K562 (cell line): ENCODE measurements at regions of chr3 and their contacts with region 1.

Region 1: GRCh38 chr3:69691860-69692259 is 47.4 kb upstream of the MITF start:
- DNase-seq: no peak
- ATAC-seq: no peak
- H3K4me3 ChIP-seq: no peak overlapping the region
- H3K27ac ChIP-seq: no peak overlapping the region
- H3K4me1 ChIP-seq: peaks cover 11 to 12% of the 10 kb centered on the region in 2 experiments; a peak in 4 of 5 replicates
- H3K27me3 ChIP-seq: no peaks in the 10 kb centered on the region
- CTCF ChIP-seq: no peak
- EP300 ChIP-seq: no peak
- POLR2A ChIP-seq: no peak
- RAD21 ChIP-seq: no peak

Region 2: DNA sequence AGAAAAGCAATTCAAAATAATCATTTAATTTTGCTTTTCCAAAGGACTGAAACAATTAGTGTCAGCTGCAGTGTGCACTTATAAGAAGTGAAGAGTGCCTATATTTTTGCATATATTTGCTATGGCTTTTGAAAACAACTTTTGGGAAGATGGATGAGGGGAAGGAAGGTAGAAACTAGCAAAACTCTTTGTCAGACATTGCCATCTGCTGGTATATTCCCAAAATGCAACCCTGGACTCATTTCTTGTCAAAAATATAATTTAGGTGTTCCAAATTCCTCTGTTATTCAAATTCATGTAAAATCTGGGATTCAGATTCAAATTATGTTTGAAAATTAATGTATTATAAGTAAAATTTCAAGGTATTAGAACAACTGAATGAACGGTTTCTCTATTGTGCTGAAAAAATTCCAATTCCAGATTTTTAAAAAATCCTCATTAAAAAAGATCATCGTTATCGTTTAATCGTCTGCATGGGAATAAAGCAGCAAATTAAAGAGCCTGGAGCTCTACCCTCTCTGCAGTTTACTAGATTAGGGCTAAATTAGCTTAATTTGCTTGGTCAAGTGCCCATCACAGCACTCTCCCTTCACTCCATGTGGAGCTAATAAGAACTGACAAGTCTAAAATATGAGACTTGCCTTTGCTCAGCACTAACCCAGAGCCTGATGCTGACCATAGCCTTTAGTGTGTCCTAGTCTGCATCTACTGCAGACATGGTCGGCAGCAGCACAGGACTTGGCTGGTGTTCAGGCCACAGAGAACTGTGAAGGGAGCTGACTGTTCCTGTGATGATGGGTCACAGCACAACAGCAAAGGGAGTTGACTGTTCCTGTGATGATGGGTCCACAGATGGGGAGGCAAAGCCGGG is 20.5 kb before region 1 on chr3:
- CTCF ChIA-PET with region 1: no interaction called
- POLR2A ChIA-PET with region 1: no interaction called
- in situ Hi-C with region 1: no loop called
- intact Hi-C with region 1: no loop called
- DNase-seq: peak; percentile 22 to 50 (median 35)
- ATAC-seq: peak; percentile 56; the same call in 2 of the 3 replicates
- H3K4me3 ChIP-seq: no peak overlapping the region
- H3K27ac ChIP-seq: no peak overlapping the region
- H3K4me1 ChIP-seq: no peaks in the 10 kb centered on the region; a peak in 1 of 5 replicates
- H3K27me3 ChIP-seq: no peaks in the 10 kb centered on the region
- CTCF ChIP-seq: peak; percentile 29 to 77 (median 50); a peak in 5 of 6 replicates
- EP300 ChIP-seq: no peak
- POLR2A ChIP-seq: no peak
- RAD21 ChIP-seq: peak; percentile 73 to 75

Region 3: GRCh38 chr3:69718866-69719586 is 27.2 kb after region 1 on chr3:
- CTCF ChIA-PET with region 1: no interaction called
- POLR2A ChIA-PET with region 1: interaction called, 3 read pairs
- in situ Hi-C with region 1: no loop called
- intact Hi-C with region 1: loop called (anchors 2 kb)
- DNase-seq: peak in 2 of 4 experiments; percentile 20 to 61
- ATAC-seq: peak; percentile 42
- H3K4me3 ChIP-seq: no peak overlapping the region
- H3K27ac ChIP-seq: peak overlapping the region; percentile 58
- H3K4me1 ChIP-seq: peaks cover 14 to 31% of the 10 kb centered on the region in 2 experiments
- H3K27me3 ChIP-seq: no peaks in the 10 kb centered on the region
- CTCF ChIP-seq: no peak; a peak in 1 of 6 replicates
- EP300 ChIP-seq: peak; percentile 89
- POLR2A ChIP-seq: no peak
- RAD21 ChIP-seq: peak in 1 of 2 experiments; percentile 26; a peak in 2 of 4 replicates

Region 4: GRCh38 chr3:69739204-69740102 is 47.6 kb after region 1 on chr3 and contains the start of gene MITF:
- CTCF ChIA-PET with region 1: no interaction called
- POLR2A ChIA-PET with region 1: interaction called, 4 read pairs
- in situ Hi-C with region 1: no loop called
- intact Hi-C with region 1: loop called (anchors 2 kb)
- DNase-seq: peak; percentile 86 to 93 (median 88)
- ATAC-seq: peak; percentile 90
- H3K4me3 ChIP-seq: peak within 1 kb of the TSS; percentile 58
- H3K27ac ChIP-seq: peak within 1 kb of the TSS; percentile 72
- H3K4me1 ChIP-seq: peaks cover 5 to 34% of the 10 kb centered on the region in 2 experiments; a peak in 3 of 5 replicates
- H3K27me3 ChIP-seq: no peaks in the 10 kb centered on the region
- CTCF ChIP-seq: no peak
- EP300 ChIP-seq: no peak
- POLR2A ChIP-seq: no peak; the same call in 1 of the 2 replicates
- RAD21 ChIP-seq: no peak
- polyA plus RNA-seq, gene MITF: 5.6 to 9.0 TPM

Region 5: DNA sequence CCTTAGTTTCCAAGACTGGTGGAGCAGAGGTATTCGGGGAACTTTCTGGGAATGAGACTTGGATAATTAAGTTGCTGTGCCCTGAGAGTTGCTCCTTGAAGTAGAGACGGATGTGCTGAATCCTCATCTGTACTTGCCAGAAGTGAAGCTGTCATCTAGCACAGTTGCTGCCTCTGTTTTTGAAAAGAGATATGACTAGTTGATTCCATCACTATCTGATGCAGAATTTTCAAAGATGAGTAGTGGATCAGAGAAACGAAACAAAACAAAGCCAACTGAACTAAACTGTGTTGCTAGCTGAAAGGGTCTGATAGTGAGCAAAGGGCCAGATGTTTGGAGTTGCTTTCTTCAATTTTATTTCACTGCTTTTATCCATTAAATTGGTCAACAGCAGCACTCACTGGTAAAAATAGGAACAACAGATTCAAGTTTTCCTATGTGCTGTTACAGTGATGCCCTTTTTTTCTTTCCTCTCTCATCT is 100.1 kb after region 1 on chr3:
- CTCF ChIA-PET with region 1: interaction called, 9 read pairs
- POLR2A ChIA-PET with region 1: interaction called, 3 read pairs
- in situ Hi-C with region 1: loop called (anchors 5 kb)
- intact Hi-C with region 1: loop called (anchors 1 kb)
- DNase-seq: peak; percentile 40 to 81 (median 52)
- ATAC-seq: peak; percentile 90
- H3K4me3 ChIP-seq: no peak overlapping the region; the same call in 1 of the 2 replicates
- H3K27ac ChIP-seq: peak overlapping the region; percentile 78; the same call in 2 of the 3 replicates
- H3K4me1 ChIP-seq: peaks cover 0 to 36% of the 10 kb centered on the region in 2 experiments; a peak in 3 of 5 replicates
- H3K27me3 ChIP-seq: no peaks in the 10 kb centered on the region
- CTCF ChIP-seq: peak; percentile 38 to 74 (median 63); a peak in 5 of 6 replicates
- EP300 ChIP-seq: peak; percentile 99
- POLR2A ChIP-seq: no peak
- RAD21 ChIP-seq: peak; percentile 90 to 92

Region 6: GRCh38 chr3:69855436-69856162 is 163.7 kb after region 1 on chr3:
- CTCF ChIA-PET with region 1: interaction called, 6 read pairs
- POLR2A ChIA-PET with region 1: interaction called, 3 read pairs
- in situ Hi-C with region 1: no loop called
- intact Hi-C with region 1: loop called (anchors 1 kb)
- DNase-seq: peak in 1 of 4 experiments; percentile 20
- ATAC-seq: peak; percentile 75
- H3K4me3 ChIP-seq: no peak overlapping the region
- H3K27ac ChIP-seq: no peak overlapping the region
- H3K4me1 ChIP-seq: peaks cover 0 to 3% of the 10 kb centered on the region in 2 experiments; a peak in 3 of 5 replicates
- H3K27me3 ChIP-seq: no peaks in the 10 kb centered on the region
- CTCF ChIP-seq: peak in 2 of 3 experiments; percentile 14 to 52; a peak in 2 of 6 replicates
- EP300 ChIP-seq: no peak
- POLR2A ChIP-seq: no peak
- RAD21 ChIP-seq: peak; percentile 50 to 64; a peak in 3 of 4 replicates

Region 7: DNA sequence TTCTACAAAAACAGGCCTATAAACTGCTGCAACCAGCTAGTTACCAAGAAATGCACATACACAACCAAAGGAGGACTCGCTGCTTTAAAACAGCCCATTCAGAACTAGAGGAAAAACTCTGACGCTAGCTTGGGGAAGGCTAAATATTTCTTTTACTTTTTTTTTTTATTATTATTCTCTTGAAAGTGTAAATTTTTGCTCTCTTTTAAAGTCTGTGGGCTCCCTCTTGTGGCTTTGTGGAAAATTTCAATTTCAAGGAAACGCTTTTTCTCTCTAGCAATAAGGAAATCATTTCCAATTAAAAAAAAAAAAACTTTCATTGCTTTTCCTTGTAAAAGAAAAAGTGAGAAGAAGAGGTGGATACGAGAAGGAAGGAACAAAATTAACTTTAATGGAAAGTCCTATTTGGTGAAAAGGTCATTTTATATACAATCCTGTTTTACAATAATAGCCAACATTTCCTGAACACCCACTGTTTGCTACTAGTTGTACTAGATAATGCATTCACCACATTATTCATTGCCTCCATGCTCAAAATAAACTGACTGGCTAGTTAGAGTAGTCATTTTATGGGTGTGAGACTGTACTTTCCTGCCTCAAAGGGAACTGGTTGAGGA is 256.5 kb after region 1 on chr3:
- CTCF ChIA-PET with region 1: interaction called, 22 read pairs
- POLR2A ChIA-PET with region 1: no interaction called
- in situ Hi-C with region 1: loop called (anchors 10 kb)
- intact Hi-C with region 1: loop called (anchors 1 kb)
- DNase-seq: peak; percentile 7 to 38 (median 10)
- ATAC-seq: no peak
- H3K4me3 ChIP-seq: no peak overlapping the region
- H3K27ac ChIP-seq: no peak overlapping the region
- H3K4me1 ChIP-seq: no peaks in the 10 kb centered on the region
- H3K27me3 ChIP-seq: no peaks in the 10 kb centered on the region
- CTCF ChIP-seq: peak in 2 of 3 experiments; percentile 27 to 64; a peak in 3 of 6 replicates
- EP300 ChIP-seq: no peak
- POLR2A ChIP-seq: no peak
- RAD21 ChIP-seq: peak; percentile 49 to 55

Region 8: GRCh38 chr3:69994919-69995318 is 303.1 kb after region 1 on chr3:
- CTCF ChIA-PET with region 1: no interaction called
- POLR2A ChIA-PET with region 1: no interaction called
- in situ Hi-C with region 1: no loop called
- intact Hi-C with region 1: loop called (anchors 2 kb)
- DNase-seq: no peak
- ATAC-seq: no peak
- H3K4me3 ChIP-seq: no peak overlapping the region
- H3K27ac ChIP-seq: no peak overlapping the region
- H3K4me1 ChIP-seq: peaks cover 4 to 7% of the 10 kb centered on the region in 2 experiments; a peak in 3 of 5 replicates
- H3K27me3 ChIP-seq: no peaks in the 10 kb centered on the region
- CTCF ChIP-seq: no peak
- EP300 ChIP-seq: no peak
- POLR2A ChIP-seq: no peak
- RAD21 ChIP-seq: no peak